CD4-positive, alpha-beta memory T cell (primary cell): ENCODE measurements at regions of chr6 and their contacts with region 1.

Region 1: DNA sequence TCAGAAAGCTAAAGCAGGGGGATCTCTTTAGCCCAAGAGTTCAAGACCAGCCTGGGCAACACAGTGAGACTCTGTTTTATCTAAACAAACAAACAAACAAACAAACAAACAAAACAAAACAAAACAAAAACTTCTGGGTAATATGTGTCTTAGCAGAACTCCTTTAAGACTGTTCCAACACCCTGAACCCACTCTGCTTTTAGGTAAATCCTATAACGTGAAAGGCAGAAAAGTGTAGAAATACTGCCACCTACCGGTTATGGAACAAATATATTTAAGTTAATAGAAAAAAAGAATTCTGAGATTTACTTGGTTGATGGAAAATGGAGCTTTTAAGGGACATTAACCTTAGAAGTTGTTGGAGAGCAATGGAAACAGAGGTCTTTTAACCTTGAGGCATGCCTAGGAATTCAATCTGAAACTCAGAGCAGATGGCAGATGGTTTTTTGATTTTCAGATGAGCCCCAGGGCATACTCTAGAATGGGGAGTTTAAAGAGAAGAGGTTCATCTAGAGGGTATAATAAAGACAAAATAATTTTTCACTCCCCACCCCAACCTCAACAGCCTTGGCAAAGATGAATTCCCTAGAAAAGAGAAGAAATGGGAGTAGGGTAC is 38.5 kb downstream of the SOD2 start:
- DNase-seq: peak in 4 of 5 donors; percentile 47 to 54 (median 50)
- H3K4me3 ChIP-seq: no peak overlapping the region
- H3K4me3 Mint-ChIP-seq: no peak overlapping the region
- H3K27ac ChIP-seq: no peak overlapping the region
- H3K27ac Mint-ChIP-seq: no peak overlapping the region
- H3K4me1 ChIP-seq: no peaks in the 10 kb centered on the region
- H3K4me1 Mint-ChIP-seq: no peaks in the 10 kb centered on the region
- H3K27me3 ChIP-seq: no peaks in the 10 kb centered on the region
- H3K27me3 Mint-ChIP-seq: no peaks in the 10 kb centered on the region

Region 2: GRCh38 chr6:159169193-159169555 is 485.4 kb before region 1 on chr6 and contains the start of gene FNDC1:
- CTCF ChIA-PET with region 1: interaction called, 125 read pairs
- POLR2A ChIA-PET with region 1: interaction called, 5 read pairs
- intact Hi-C with region 1: loop called (anchors 1 kb)
- DNase-seq: peak in 4 of 5 donors; percentile 43 to 63 (median 52)
- H3K4me3 ChIP-seq: peak within 1 kb of the TSS in 1 of 2 donors; percentile 10
- H3K4me3 Mint-ChIP-seq: peak within 1 kb of the TSS; percentile 69 to 79 (median 76)
- H3K27ac ChIP-seq: no peak within 1 kb of the TSS
- H3K27ac Mint-ChIP-seq: peak within 1 kb of the TSS in 1 of 7 donors; percentile 62
- H3K4me1 ChIP-seq: peaks cover 17% of the 10 kb centered on the region
- H3K4me1 Mint-ChIP-seq: peaks cover 3 to 30% (median 17%) of the 10 kb centered on the region in 4 donors
- H3K27me3 ChIP-seq: peaks cover 41% of the 10 kb centered on the region
- H3K27me3 Mint-ChIP-seq: peaks cover 32 to 59% of the 10 kb centered on the region in 2 donors
- total RNA-seq, gene FNDC1: not detected

Region 3: GRCh38 chr6:159174263-159174969 is 480.2 kb before region 1 on chr6:
- CTCF ChIA-PET with region 1: interaction called, 125 read pairs
- POLR2A ChIA-PET with region 1: interaction called, 5 read pairs
- intact Hi-C with region 1: loop called (anchors 1 kb)
- DNase-seq: peak; percentile 58 to 63 (median 61)
- H3K4me3 ChIP-seq: no peak overlapping the region
- H3K4me3 Mint-ChIP-seq: peak overlapping the region in 5 of 8 donors; percentile 12 to 62 (median 47)
- H3K27ac ChIP-seq: no peak overlapping the region
- H3K27ac Mint-ChIP-seq: peak overlapping the region in 2 of 7 donors; percentile 38 to 67
- H3K4me1 ChIP-seq: peaks cover 11% of the 10 kb centered on the region
- H3K4me1 Mint-ChIP-seq: peaks cover 7 to 17% (median 12%) of the 10 kb centered on the region in 4 donors
- H3K27me3 ChIP-seq: peaks cover 32% of the 10 kb centered on the region
- H3K27me3 Mint-ChIP-seq: peaks cover 31 to 49% of the 10 kb centered on the region in 2 donors

Region 4: GRCh38 chr6:159252955-159253508 is 401.6 kb before region 1 on chr6:
- CTCF ChIA-PET with region 1: interaction called, 23 read pairs
- POLR2A ChIA-PET with region 1: no interaction called
- intact Hi-C with region 1: loop called (anchors 5 kb)
- DNase-seq: peak in 3 of 5 donors; percentile 3 to 18 (median 7)
- H3K4me3 ChIP-seq: no peak overlapping the region
- H3K4me3 Mint-ChIP-seq: no peak overlapping the region
- H3K27ac ChIP-seq: no peak overlapping the region
- H3K27ac Mint-ChIP-seq: no peak overlapping the region
- H3K4me1 ChIP-seq: no peaks in the 10 kb centered on the region
- H3K4me1 Mint-ChIP-seq: peaks cover 0 to 5% (median 2%) of the 10 kb centered on the region in 4 donors
- H3K27me3 ChIP-seq: no peaks in the 10 kb centered on the region
- H3K27me3 Mint-ChIP-seq: peaks cover 13 to 26% of the 10 kb centered on the region in 2 donors